Tibial artery (tissue), 4 donors: ENCODE measurements at regions of chrX and their contacts with region 1.

Region 1: DNA sequence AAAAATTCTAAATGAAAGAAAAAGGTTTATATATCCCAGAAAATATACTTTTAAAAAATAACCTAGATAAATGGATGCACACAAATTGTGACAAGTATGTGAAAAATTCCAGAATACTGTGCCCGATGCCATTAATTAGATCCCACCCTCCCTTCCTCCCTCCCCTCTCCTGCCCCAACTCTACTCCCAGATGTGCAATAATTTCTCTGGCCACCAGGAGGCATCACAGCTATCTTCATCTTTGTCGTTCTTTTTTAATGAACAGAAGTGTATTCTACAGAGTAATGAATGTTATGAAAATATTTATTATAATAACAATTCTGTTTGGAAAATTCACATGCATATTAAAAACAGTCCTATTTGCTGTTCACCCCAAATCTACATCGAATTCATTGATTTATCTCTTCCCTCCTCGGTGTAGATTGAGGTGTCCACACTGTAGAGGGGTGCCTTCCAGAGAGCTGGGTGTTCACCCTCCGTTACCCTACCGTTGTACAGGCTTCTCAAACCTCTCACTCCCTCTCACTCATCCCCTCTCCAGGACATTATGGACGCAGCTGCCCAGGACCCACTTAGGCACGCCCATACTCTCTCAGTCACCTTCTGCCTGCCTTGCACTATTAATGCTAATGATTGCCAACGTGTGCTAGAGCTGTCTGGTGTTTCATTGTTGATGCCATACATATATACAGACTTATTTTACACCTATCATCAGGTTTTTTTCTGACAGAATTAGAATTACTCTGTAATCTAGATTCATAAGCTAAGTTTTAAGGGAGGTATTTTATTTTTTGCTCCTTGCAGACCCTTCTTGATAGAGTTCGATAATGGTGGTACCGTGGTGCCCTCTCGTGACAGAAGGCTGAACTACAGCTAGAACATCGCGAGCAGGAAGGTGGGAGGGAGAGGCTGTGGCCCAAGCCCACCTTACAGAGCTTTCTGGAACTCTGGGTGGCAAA is 14.1 kb downstream of the RAB40AL start:
- DNase-seq: peak in 1 of 2 donors; percentile 35
- H3K4me3 ChIP-seq: peak overlapping the region in 1 of 2 donors; percentile 20
- H3K27ac ChIP-seq: no peak overlapping the region
- H3K4me1 ChIP-seq: no peaks in the 10 kb centered on the region
- H3K27me3 ChIP-seq: no peaks in the 10 kb centered on the region
- CTCF ChIP-seq: peak; percentile 23 to 51

Region 2: GRCh38 chrX:103157496-103158320 is 206.5 kb after region 1 on chrX:
- intact Hi-C with region 1: loop called (anchors 5 kb)
- DNase-seq: no peak
- H3K4me3 ChIP-seq: no peak overlapping the region
- H3K27ac ChIP-seq: no peak overlapping the region
- H3K4me1 ChIP-seq: peaks cover 0 to under 1% (median under 1%) of the 10 kb centered on the region in 4 donors
- H3K27me3 ChIP-seq: no peaks in the 10 kb centered on the region
- CTCF ChIP-seq: peak; percentile 34 to 56

Region 3: DNA sequence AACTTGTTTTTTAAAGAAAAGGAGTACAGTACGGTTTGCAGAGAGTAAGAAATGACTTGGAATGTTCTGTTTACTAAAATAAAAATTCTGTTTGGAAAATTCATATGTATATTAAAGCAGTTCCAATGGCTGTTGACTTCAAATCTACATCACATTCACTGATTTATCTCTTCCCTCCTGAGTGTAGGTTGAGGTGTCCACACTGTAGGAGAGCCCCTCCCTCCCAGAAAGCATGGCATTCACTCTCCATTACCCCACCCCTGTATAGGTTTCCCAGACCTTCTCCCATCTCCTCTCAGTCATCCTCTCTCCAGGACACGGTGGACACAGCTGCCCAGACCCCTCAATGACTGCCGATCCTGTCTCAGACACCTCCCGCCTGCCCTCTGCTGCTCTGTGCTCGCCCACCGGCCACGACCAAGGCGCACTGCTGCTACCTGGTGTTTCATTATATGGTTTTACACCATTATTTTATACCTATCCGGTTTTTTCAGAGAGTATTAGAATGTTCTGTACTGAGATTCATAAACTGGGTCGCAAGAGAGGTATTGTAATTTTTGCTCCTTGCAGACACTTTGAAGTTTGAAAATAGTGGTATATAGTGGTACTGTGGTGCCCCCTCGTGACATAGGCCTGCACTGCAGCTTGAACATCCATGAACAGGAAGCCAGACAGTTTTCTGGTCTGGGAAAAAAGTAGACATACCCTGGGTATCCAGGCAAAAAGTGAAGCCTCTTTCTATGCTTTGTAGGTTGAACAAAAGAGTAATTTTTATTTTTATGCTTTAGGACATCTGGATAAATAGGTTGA is 225.0 kb after region 1 on chrX:
- intact Hi-C with region 1: loop called (anchors 5 kb)
- DNase-seq: peak; percentile 64 to 65
- H3K4me3 ChIP-seq: no peak overlapping the region
- H3K27ac ChIP-seq: no peak overlapping the region
- H3K4me1 ChIP-seq: peaks cover 0 to 3% (median 0%) of the 10 kb centered on the region in 4 donors
- H3K27me3 ChIP-seq: no peaks in the 10 kb centered on the region
- CTCF ChIP-seq: peak; percentile 49 to 55